ENCODE measurements at regions of chr16 and their contacts with region 1.

Region 1: GRCh38 chr16:12781777-12782176 is 21.9 kb downstream of the CPPED1 start:
- DNase-seq: peak in 4 of 10 donors; percentile 24 to 62 (median 52)
- H3K4me3 ChIP-seq: no peak overlapping the region
- H3K27ac ChIP-seq: peak overlapping the region in 5 of 59 donors; percentile 2 to 57 (median 48)
- H3K27me3 ChIP-seq: no peaks in the 10 kb centered on the region
- CTCF ChIP-seq: no peak

Region 2: GRCh38 chr16:12178251-12178990 is 603.4 kb before region 1 on chr16:
- intact Hi-C with region 1: loop called in 1 of 2 experiments (anchors 5 kb)
- DNase-seq: peak in 6 of 10 donors; percentile 35 to 70 (median 58)
- H3K4me3 ChIP-seq: no peak overlapping the region
- H3K27ac ChIP-seq: no peak overlapping the region
- H3K27me3 ChIP-seq: no peaks in the 10 kb centered on the region
- CTCF ChIP-seq: no peak

Region 3: DNA sequence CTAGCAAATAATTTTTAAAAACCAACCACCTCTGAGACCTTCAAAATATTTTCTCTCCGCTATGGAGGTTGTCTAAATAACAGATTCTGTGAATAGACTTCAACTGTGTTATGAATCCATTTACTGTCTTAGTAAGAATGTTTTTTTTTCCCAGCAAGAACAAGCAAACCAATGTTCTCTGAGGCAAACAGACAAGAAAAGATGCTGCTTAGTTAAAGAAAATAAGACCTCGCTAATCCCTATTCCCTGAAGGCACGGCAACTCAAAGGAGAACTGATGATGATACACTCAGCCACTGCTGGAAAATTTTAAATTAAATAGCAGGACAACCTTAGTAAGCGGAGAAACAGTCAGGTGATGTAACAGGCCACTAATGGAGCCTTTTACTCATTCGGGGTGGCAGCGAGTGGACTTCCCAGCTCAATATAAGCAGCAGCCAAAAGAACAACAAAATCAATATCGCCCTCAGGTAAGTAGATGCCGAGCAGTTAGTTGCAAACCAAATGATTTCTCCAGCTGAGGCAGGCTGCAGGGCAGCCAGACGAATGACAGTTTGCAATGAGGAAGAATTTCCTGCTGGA is 59.8 kb before region 1 on chr16:
- intact Hi-C with region 1: no loop called
- DNase-seq: no peak
- H3K4me3 ChIP-seq: peak overlapping the region in 7 of 59 donors; percentile 6 to 32 (median 22)
- H3K27ac ChIP-seq: peak overlapping the region in 54 of 59 donors; percentile 1 to 81 (median 60)
- H3K27me3 ChIP-seq: no peaks in the 10 kb centered on the region
- CTCF ChIP-seq: no peak

Region 4: DNA sequence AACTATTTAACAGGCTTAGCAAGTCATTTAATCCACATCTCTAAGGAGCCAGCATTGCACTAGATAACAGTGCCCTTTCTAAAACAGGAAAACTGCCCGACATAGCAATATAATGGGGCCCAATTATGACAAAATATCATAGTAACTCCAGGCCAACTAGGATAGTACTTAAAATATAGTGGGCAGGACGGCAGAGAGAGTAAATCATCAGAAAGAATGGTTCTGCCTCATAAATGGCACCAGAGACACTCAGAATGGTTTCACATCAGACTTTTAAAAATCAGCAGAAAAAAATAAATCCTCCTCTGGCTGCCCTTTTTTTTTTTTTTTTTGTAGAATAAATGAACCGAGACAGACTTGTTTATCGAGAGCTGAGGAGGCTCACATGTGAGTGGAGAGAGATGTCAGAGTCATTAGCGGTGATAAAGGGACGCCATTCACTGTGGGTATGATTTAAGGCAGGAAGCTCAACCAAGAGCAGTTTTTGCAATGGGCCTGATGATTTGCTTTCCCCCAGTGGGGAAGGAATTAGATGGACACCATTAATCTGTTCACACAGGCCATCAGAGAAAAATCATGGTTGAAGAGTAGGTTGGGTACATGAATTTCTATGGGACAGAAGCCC is 40.7 kb before region 1 on chr16:
- intact Hi-C with region 1: no loop called
- DNase-seq: no peak
- H3K4me3 ChIP-seq: no peak overlapping the region
- H3K27ac ChIP-seq: peak overlapping the region in 1 of 59 donors; percentile 1
- H3K27me3 ChIP-seq: no peaks in the 10 kb centered on the region
- CTCF ChIP-seq: no peak

Region 5: DNA sequence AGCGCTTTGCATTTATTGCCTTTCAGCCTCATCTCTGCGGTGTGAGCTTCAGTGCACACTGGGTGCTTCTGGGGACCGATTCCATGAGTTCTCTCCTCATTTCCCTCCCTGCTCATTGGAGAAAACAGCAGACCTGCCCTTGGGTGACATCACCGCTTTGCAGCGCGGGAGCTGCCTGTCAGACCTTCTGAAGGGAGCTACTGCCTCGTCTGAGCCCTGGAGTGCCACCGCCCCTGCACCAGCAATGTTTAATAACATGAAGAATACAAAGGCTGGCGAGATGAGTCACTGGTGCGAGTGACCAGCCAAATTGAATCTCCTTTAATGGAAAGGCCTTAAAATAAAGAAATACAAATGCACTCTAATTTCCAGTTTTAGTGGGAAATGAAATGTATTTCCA is 52.2 kb after region 1 on chr16:
- intact Hi-C with region 1: no loop called
- DNase-seq: peak in 4 of 10 donors; percentile 20 to 58 (median 38)
- H3K4me3 ChIP-seq: no peak overlapping the region
- H3K27ac ChIP-seq: no peak overlapping the region
- H3K27me3 ChIP-seq: peaks cover 0 to 3% (median 0%) of the 10 kb centered on the region in 45 donors
- CTCF ChIP-seq: no peak

Region 6: DNA sequence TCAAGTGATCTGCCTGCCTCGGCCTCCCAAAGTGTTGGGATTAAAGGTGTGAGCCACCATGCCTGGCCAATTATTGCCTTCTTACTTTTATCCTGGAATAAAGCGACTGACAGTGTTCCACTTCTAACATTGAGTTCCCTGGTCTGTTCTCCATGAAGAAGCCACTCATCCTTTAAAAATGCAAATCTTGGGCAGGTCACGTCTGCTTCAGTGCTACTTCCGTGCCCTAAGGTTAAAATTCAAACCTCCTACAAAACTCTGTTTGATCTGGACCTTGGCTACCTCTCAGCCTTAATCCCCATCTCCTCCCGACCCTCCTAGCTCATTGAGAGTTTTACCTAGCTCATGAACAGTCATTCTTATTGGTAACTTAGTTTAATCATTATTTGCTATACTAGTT is 110.1 kb after region 1 on chr16:
- intact Hi-C with region 1: no loop called
- DNase-seq: no peak
- H3K4me3 ChIP-seq: no peak overlapping the region
- H3K27ac ChIP-seq: no peak overlapping the region
- H3K27me3 ChIP-seq: peaks cover 0 to 24% (median 0%) of the 10 kb centered on the region in 45 donors
- CTCF ChIP-seq: no peak